GM12878 (cell line): ENCODE measurements at regions of chr3 and their contacts with region 1.

Region 1: DNA sequence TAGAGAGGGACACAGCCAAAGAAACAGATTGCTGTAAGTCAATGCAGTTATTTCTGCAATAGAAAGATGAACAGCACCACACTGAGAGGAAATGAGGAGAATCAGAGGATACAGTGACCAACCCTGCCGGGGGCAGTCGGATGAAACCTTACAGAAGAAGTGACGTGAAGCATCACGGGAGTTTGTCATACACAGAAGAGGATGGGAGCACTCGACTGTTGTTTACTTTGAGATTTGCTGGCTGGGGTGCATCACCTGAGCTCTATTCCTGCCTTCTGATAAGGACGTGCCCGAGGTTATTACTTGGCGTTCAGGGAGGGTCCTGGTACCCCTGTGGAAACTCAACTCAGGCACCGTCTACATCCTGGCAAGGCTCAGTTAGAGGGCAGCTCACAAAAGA is 45.4 kb downstream of the MAGEF1 start:
- DNase-seq: no peak
- ATAC-seq: no peak
- H3K4me3 ChIP-seq: no peak overlapping the region
- H3K27ac ChIP-seq: no peak overlapping the region
- H3K4me1 ChIP-seq: no peaks in the 10 kb centered on the region
- H3K27me3 ChIP-seq: peaks cover 0 to 4% of the 10 kb centered on the region in 2 experiments; a peak in 3 of 4 replicates
- CTCF ChIP-seq: no peak
- EP300 ChIP-seq: no peak
- POLR2A ChIP-seq: no peak
- RAD21 ChIP-seq: no peak

Region 2: GRCh38 chr3:184261270-184261853 is 405.1 kb before region 1 on chr3 and contains the start of gene CAMK2N2:
- CTCF ChIA-PET with region 1: no interaction called
- POLR2A ChIA-PET with region 1: no interaction called
- RAD21 ChIA-PET with region 1: no interaction called
- SMC1A ChIA-PET with region 1: no interaction called
- in situ Hi-C with region 1: no loop called
- intact Hi-C with region 1: no loop called
- DNase-seq: no peak
- ATAC-seq: peak; percentile 81
- H3K4me3 ChIP-seq: peak within 1 kb of the TSS; percentile 67; the same call in 1 of the 2 replicates
- H3K27ac ChIP-seq: no peak within 1 kb of the TSS
- H3K4me1 ChIP-seq: 0 out of 2 replicates have a peak, but pooled peaks cover 4% of the 10 kb centered on the region
- H3K27me3 ChIP-seq: peaks cover 2 to 11% of the 10 kb centered on the region in 2 experiments
- CTCF ChIP-seq: no peak
- EP300 ChIP-seq: no peak
- POLR2A ChIP-seq: no peak
- RAD21 ChIP-seq: no peak
- polyA plus RNA-seq, gene CAMK2N2: 0.06 to 0.24 TPM

Region 3: DNA sequence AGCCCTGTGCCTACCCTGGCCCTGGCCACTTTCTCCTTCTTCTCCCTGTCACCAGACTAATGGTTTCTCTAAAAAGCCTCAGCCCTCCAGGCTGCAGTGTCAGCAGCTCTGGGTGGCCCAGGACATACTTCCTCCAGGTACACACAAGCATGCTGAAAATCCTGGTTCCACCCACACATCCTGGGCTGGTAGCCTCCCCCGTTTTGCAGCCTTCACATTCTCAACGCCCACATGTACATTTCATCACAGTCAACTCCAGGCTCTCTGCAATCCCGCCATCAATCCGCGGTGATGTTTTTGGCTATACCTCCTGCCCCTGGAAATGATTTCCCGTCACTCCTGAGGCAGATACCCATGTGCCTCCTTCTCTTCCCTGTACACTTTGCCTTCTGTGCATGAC is 14.0 kb before region 1 on chr3:
- CTCF ChIA-PET with region 1: no interaction called
- POLR2A ChIA-PET with region 1: no interaction called
- RAD21 ChIA-PET with region 1: no interaction called
- SMC1A ChIA-PET with region 1: no interaction called
- in situ Hi-C with region 1: no loop called
- intact Hi-C with region 1: no loop called
- DNase-seq: no peak
- ATAC-seq: no peak
- H3K4me3 ChIP-seq: no peak overlapping the region
- H3K27ac ChIP-seq: no peak overlapping the region
- H3K4me1 ChIP-seq: peaks cover 7% of the 10 kb centered on the region
- H3K27me3 ChIP-seq: peaks cover 2 to 4% of the 10 kb centered on the region in 2 experiments; a peak in 3 of 4 replicates
- CTCF ChIP-seq: no peak
- EP300 ChIP-seq: no peak
- POLR2A ChIP-seq: no peak
- RAD21 ChIP-seq: no peak

Region 4: DNA sequence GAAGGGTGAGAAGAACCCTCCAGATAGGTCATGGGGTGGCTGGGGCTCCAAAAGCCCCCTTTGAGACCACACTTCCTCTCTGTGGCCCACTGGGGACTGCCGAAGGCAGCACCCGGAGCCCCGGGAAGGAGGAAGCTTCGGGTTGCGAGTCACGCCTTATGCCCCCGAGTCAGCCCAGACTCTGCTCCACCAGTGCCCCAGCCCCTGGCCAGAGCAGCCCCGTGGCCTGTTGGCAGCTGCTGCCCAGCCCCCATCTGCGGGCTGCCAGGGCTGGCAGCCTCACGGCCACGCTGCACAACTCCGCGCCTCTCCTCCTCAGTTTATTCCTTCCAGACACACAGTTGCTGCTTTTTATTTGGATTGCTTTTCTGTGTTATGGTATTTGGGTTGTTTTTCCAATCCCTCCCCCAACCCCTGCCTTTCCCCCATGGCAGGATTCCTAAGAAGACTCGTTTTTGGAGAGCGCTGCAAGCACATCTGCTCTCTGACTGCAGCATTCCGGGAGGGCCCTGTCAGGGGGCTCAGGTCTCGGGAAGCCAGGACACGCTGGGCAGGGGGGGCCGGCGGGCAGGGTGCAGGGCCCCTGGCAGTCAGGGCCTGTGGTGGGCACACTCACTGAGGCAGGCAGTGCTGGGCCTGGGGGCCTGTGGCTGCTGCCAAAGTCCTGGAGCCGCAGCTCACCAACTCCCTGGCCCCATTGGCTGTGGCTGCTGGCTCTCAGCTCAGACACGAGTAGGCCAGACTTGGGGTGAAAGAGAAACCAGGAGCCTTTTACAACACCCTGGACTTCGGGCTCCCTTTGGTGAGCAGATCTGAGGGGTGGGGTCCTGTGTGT is 25.2 kb after region 1 on chr3:
- CTCF ChIA-PET with region 1: no interaction called
- POLR2A ChIA-PET with region 1: no interaction called
- RAD21 ChIA-PET with region 1: interaction called, 3 read pairs
- SMC1A ChIA-PET with region 1: no interaction called
- in situ Hi-C with region 1: no loop called
- intact Hi-C with region 1: loop called (anchors 2 kb)
- DNase-seq: no peak
- ATAC-seq: peak; percentile 55
- H3K4me3 ChIP-seq: no peak overlapping the region
- H3K27ac ChIP-seq: no peak overlapping the region
- H3K4me1 ChIP-seq: no peaks in the 10 kb centered on the region
- H3K27me3 ChIP-seq: peaks cover 0 to 5% of the 10 kb centered on the region in 2 experiments; a peak in 2 of 4 replicates
- CTCF ChIP-seq: no peak
- EP300 ChIP-seq: no peak
- POLR2A ChIP-seq: no peak
- RAD21 ChIP-seq: no peak